ENCODE measurements at regions of chr14 and their contacts with region 1.

Region 1: GRCh38 chr14:100417466-100417865 is 94.3 kb downstream of the SLC25A47 start:
- DNase-seq: peak; percentile 77
- H3K4me3 Mint-ChIP-seq: no peak overlapping the region
- H3K27ac Mint-ChIP-seq: no peak overlapping the region
- H3K4me1 Mint-ChIP-seq: peaks cover 9% of the 10 kb centered on the region
- H3K27me3 Mint-ChIP-seq: no peaks in the 10 kb centered on the region
- CTCF ChIP-seq: peak; percentile 50

Region 2: DNA sequence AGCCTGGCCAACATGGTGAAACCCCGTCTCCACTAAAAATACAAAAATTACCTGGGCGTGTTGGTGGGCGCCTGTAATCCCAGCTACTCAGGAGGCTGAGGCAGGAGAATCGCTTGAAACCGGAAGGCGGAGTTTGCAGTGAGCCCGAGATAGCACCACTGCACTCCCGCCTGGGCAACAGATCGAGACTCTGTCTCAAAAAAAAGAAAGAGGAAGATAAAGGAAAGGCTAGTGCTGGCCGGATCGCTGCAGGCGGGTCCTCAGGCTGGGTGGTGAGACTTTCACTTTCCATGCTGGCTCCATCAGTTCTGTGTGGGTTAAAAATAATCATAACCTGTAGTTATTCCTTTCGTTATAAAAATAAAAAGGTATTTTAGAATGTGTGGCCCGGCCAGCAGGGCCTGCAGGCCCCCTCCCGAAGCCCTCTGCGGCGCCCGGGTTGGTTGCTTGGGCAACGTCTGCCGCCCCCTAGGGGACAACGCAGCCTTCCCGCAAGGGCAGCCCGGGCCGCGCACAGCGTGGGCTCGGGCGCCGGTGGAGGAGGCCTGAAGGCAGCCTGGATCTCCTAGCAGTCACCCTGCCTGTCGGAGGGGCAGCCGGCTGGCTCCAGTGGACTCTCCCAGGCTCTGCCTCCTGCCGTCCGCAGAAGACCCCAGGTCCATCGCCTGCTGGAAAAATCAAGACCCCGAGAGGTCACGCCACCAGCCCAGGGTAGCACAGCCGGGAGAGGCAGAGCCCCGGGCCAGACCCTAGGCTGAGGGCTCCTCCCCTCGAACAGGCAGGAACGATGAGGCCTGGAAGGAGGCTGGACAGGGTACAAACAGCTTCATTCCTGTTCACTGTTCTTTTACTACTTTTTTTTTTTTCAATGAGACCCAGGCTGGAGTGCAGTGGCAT is 99.3 kb before region 1 on chr14:
- CTCF ChIA-PET with region 1: no interaction called
- intact Hi-C with region 1: no loop called
- DNase-seq: peak; percentile 77
- H3K4me3 Mint-ChIP-seq: no peak overlapping the region
- H3K27ac Mint-ChIP-seq: no peak overlapping the region
- H3K4me1 Mint-ChIP-seq: no peaks in the 10 kb centered on the region
- H3K27me3 Mint-ChIP-seq: peaks cover 16% of the 10 kb centered on the region
- CTCF ChIP-seq: peak; percentile 79

Region 3: DNA sequence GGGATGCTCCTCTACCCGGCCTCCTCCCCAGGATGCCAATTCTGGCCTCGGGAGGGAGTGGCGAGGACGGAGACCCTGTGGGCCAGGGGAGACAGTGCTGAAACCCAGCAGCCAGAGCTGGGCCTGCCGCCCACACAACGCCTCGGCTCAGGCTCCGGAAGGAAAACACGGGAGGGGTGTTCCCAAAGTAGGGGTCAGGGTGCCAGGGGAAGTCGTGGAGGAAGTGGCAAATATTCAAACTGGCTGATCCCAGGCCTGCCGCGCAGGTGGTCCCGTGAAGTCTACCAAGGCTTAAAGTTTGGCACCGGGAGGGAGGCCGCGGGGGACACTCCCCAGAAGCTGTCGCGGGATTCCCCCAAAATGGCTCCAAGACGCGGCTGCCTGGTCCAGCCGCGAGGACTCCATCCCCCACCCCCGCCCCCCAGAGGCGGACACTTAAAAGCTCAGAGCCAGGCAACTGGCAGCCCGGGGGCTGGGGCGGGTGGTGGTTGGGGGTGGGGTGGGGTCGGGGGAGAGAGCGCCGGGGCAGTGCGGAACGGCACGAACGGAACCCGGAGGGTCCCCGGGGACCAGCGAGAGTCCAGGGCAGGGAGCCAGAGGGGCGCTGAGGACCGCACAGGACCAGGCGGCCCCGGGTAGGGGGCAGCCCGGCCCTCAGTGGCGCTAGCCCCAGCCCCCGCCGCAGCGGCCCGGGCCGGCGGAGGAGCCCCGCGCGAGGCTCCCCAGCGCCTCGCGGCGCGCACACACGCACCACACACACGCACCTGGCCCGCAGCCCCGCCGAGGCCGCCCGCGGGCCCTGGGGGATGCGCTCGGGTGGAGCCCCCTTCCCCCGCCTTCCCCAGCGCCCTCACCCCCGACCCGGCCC is 149.8 kb after region 1 on chr14:
- CTCF ChIA-PET with region 1: no interaction called
- intact Hi-C with region 1: no loop called
- DNase-seq: no peak
- H3K4me3 Mint-ChIP-seq: no peak overlapping the region
- H3K27ac Mint-ChIP-seq: no peak overlapping the region
- H3K4me1 Mint-ChIP-seq: no peaks in the 10 kb centered on the region
- H3K27me3 Mint-ChIP-seq: peaks cover 71% of the 10 kb centered on the region
- CTCF ChIP-seq: no peak

Region 4: DNA sequence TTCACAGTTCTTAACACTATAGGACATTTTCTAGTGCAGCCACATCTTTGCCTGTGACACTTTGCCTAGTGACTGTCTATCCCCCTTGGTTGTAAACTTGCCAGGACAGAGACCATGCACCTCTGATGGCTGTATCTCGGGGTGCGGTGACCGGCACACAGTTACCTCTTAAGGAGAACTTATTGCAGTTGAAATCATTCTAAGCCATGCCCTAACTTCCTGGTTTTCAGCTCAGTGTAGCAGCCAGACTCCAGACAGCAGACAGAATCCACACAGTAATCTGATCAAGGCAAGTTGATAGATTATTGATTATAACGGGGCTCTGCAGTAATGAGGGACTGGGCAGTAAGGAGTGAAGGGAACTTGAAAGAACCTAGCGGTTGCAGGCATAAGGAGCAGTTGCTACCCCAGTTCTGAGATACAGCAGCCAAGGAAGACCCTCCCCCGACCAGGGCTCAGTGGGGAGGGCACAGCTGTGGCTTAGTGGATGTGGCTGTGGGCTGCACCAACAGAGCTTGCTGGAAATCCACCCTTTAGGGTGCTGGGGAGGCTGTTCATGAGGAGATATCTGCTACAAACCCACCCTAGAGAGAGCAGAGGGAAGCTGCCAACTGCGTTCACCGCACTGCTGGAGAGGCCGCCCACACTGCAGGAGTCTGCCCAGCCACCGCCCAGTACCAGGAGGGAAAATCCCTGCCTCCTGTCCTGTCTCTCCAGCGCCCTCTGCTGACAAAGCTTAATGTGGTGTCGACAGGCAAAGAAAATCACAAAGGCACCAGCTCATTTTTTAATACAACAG is 227.9 kb after region 1 on chr14:
- CTCF ChIA-PET with region 1: interaction called, 40 read pairs
- intact Hi-C with region 1: no loop called
- DNase-seq: peak; percentile 91
- H3K4me3 Mint-ChIP-seq: no peak overlapping the region
- H3K27ac Mint-ChIP-seq: no peak overlapping the region
- H3K4me1 Mint-ChIP-seq: peaks cover 26% of the 10 kb centered on the region
- H3K27me3 Mint-ChIP-seq: peaks cover 33% of the 10 kb centered on the region
- CTCF ChIP-seq: peak; percentile 78